ENCODE measurements at regions of chr11 and their contacts with region 1.

Region 1: GRCh38 chr11:75802913-75803820 is 11.8 kb upstream of the UVRAG start:
- DNase-seq: peak; percentile 79
- H3K4me3 Mint-ChIP-seq: no peak overlapping the region
- H3K27ac Mint-ChIP-seq: no peak overlapping the region
- H3K4me1 Mint-ChIP-seq: peaks cover 15% of the 10 kb centered on the region
- H3K27me3 Mint-ChIP-seq: no peaks in the 10 kb centered on the region

Region 2: GRCh38 chr11:75706260-75706729 is 96.9 kb before region 1 on chr11:
- CTCF ChIA-PET with region 1: no interaction called
- POLR2A ChIA-PET with region 1: no interaction called
- intact Hi-C with region 1: no loop called
- DNase-seq: peak; percentile 76
- H3K4me3 Mint-ChIP-seq: no peak overlapping the region
- H3K27ac Mint-ChIP-seq: no peak overlapping the region
- H3K4me1 Mint-ChIP-seq: no peaks in the 10 kb centered on the region
- H3K27me3 Mint-ChIP-seq: peaks cover 3% of the 10 kb centered on the region

Region 3: DNA sequence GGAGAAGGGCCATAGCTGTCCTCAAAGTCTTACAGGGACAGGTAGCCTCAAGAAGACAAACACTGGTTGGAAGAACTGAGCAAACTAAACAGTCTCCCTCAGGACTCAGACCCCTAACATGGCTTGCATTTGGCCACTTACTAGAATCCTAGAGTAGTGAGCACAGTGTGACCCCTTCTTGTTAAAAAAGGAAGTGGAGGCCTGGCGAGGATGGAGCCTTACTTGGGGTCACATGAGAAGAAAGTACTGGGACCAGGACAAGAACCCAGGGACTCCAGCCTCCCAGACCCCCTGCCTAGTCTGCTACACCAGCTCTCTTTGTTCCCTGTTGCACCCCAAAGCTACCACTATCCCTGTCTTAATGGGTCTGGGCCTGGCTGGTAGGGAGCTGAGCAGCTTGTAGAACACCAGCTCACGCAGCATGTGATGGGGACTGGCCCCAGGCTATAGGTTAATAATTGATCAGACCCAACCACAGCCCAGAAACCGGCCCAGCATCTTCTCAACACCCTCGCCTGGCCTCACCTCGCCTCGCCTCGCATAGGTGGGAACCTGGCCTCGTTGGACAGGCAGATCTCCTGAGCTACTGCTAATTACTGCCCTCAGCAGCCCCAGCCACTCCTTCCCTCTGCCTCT is 16.9 kb before region 1 on chr11:
- CTCF ChIA-PET with region 1: interaction called, 11 read pairs
- POLR2A ChIA-PET with region 1: no interaction called
- intact Hi-C with region 1: no loop called
- DNase-seq: no peak
- H3K4me3 Mint-ChIP-seq: no peak overlapping the region
- H3K27ac Mint-ChIP-seq: no peak overlapping the region
- H3K4me1 Mint-ChIP-seq: no peaks in the 10 kb centered on the region
- H3K27me3 Mint-ChIP-seq: no peaks in the 10 kb centered on the region

Region 4: DNA sequence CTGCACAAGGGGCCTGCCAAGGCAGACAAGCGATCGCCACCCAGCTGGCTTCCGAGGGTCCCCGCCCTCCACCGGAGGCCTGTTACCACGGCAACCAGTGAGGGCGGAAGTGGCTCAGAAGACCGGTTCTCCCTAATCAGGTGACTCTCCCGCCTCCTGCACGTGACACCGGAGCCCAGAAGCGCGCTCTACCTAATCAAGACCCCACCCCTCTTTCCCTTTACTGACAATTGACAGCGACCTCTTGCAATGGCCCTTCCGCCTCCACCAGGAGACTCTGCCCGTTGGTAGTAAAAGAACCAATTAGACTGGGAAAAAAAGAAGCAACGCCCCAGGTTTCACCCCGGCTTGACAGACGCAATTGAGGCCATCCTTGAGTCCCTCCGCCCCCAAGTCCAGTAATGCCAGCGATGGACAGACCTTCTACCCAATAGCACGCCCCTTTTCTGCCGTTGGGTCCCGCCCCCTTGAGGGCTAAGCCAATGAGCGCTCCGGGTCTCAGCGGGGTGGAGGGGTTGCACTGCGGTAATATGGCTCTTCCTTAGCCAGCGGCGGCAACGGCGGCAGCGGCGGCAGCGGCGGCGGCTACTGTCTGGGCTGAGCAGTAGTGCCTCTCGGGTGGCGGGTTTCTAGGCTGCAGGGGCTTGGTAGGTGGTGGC is 11.6 kb after region 1 on chr11 and contains the start of gene UVRAG:
- CTCF ChIA-PET with region 1: interaction called, 50 read pairs
- POLR2A ChIA-PET with region 1: interaction called, 3 read pairs
- intact Hi-C with region 1: no loop called
- DNase-seq: peak; percentile 98
- H3K4me3 Mint-ChIP-seq: peak within 1 kb of the TSS; percentile 88
- H3K27ac Mint-ChIP-seq: peak within 1 kb of the TSS; percentile 86
- H3K4me1 Mint-ChIP-seq: peaks cover 16% of the 10 kb centered on the region
- H3K27me3 Mint-ChIP-seq: no peaks in the 10 kb centered on the region
- total RNA-seq, gene UVRAG: 15.5 to 16.7 TPM

Region 5: GRCh38 chr11:75823415-75824345 is 20.5 kb after region 1 on chr11:
- CTCF ChIA-PET with region 1: interaction called, 11 read pairs
- POLR2A ChIA-PET with region 1: no interaction called
- intact Hi-C with region 1: no loop called
- DNase-seq: no peak
- H3K4me3 Mint-ChIP-seq: no peak overlapping the region
- H3K27ac Mint-ChIP-seq: no peak overlapping the region
- H3K4me1 Mint-ChIP-seq: peaks cover 29% of the 10 kb centered on the region
- H3K27me3 Mint-ChIP-seq: no peaks in the 10 kb centered on the region

Region 6: DNA sequence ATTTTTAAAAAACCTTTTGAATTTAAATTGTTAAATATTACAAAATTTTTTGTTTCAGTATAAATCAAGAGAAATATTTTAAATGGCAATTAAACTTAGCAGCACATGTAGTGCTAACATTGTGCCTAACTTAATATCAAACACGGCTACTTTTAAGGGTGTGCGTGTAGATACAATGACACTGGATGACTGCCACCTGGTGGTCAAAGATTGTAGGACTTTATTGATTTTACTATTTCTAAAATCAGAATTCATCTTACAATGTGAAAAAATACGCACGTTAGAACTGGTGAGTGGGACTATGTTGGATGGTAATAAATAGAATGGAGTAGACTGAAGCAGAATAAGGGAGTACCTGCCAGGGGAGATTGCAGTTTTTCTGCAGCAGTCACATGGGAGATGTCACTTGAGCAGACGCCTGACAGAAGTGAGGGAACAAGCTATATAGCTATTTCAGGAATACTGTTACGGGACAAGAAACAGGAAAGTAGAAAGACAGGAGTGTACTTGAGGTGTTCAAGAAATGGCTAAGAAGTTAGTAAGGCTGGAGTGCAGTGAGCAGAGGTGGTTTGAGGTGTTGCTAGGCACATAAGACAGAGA is 64.7 kb after region 1 on chr11:
- CTCF ChIA-PET with region 1: interaction called, 127 read pairs
- POLR2A ChIA-PET with region 1: no interaction called
- intact Hi-C with region 1: loop called (anchors 1 kb)
- DNase-seq: peak; percentile 22
- H3K4me3 Mint-ChIP-seq: no peak overlapping the region
- H3K27ac Mint-ChIP-seq: no peak overlapping the region
- H3K4me1 Mint-ChIP-seq: peaks cover 4% of the 10 kb centered on the region
- H3K27me3 Mint-ChIP-seq: no peaks in the 10 kb centered on the region

Region 7: GRCh38 chr11:76318744-76319384 is 515.7 kb after region 1 on chr11:
- CTCF ChIA-PET with region 1: interaction called, 11 read pairs
- POLR2A ChIA-PET with region 1: no interaction called
- intact Hi-C with region 1: loop called (anchors 2 kb)
- DNase-seq: peak; percentile 88
- H3K4me3 Mint-ChIP-seq: no peak overlapping the region
- H3K27ac Mint-ChIP-seq: no peak overlapping the region
- H3K4me1 Mint-ChIP-seq: peaks cover 15% of the 10 kb centered on the region
- H3K27me3 Mint-ChIP-seq: peaks cover 26% of the 10 kb centered on the region

Measured in activated CD4-positive, alpha-beta memory T cell treated with anti-CD3 and anti-CD28 coated beads for 36 hours (primary cell).